Left ventricle myocardium inferior (tissue), 1 donor: ENCODE measurements at regions of chr3 and their contacts with region 1.

Region 1: DNA sequence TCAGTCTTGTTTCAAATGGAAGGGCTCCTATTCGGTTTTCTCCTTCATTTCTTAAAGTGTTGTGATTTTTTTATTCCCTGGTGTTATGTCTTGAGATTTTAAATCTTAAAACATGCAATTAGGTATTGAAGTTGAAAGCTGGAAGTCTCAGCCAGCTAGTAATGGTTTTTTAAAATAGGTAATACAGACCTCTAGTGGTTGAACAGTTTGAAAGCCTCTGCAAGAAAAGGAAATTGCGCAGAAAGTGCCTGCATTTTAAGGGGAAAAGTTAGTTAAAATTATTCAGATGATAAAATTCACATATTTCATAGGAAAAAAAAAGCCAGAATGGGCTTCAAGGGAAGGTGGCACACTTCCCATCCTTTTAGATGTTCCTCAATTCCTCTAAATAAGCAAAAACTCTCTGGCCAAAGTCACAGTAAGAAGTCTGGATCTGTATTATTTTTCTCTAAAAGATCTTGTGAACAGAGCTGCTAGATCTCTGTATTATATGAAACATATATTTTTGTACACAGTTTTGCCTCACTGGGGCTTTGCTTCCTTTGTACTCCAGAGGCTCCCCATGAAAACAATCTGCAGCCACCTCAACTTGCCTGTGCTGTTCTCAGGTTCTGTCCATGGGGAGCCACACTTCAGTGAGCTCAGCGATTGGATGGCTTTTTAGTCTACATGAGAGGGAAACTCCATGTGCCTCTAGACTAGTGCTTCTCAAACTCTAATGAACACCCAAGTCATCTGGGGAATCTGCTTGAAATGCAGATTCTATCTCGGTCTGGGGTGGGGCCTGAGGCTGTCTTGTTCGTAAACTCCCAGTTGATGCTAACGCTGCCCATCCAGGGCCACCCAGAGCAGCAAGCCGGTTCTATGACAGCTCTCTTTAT is 21.5 kb downstream of the AGTR1 start:
- DNase-seq: no peak
- H3K4me3 ChIP-seq: no peak overlapping the region
- H3K27ac ChIP-seq: no peak overlapping the region
- H3K4me1 ChIP-seq: no peaks in the 10 kb centered on the region
- H3K27me3 ChIP-seq: no peaks in the 10 kb centered on the region
- CTCF ChIP-seq: peak; percentile 50

Region 2: DNA sequence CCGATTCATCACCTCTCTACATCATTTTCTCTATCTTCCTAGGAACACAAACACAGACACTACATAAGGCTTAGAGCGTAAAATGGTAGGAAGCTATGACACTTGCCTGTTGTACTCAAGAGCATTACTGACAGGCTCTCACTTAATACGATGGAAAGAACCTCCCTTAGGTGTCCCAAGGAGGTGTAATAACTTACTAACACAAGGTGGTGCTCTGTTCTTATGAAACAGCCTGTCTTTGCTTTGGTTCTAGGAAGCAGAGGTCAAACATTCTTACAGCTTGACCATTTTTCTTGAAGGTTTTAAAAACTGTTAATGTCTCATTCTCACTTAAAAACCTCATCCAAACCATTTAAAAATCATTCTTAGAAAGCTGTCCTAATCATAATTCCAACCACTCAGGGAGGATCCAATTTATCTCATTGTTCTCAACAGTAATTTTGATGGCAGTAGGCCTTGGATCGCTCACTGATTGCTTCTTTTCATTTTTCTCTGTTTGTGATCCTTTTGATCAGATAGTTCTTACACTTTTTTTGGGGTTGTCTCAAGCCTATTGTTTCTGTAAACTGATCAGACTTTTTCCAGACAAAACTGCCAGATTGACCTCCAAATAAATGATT is 339.3 kb before region 1 on chr3:
- intact Hi-C with region 1: loop called (anchors 10 kb)
- DNase-seq: no peak
- H3K4me3 ChIP-seq: no peak overlapping the region
- H3K27ac ChIP-seq: no peak overlapping the region
- H3K4me1 ChIP-seq: no peaks in the 10 kb centered on the region
- H3K27me3 ChIP-seq: no peaks in the 10 kb centered on the region
- CTCF ChIP-seq: peak; percentile 56

Region 3: DNA sequence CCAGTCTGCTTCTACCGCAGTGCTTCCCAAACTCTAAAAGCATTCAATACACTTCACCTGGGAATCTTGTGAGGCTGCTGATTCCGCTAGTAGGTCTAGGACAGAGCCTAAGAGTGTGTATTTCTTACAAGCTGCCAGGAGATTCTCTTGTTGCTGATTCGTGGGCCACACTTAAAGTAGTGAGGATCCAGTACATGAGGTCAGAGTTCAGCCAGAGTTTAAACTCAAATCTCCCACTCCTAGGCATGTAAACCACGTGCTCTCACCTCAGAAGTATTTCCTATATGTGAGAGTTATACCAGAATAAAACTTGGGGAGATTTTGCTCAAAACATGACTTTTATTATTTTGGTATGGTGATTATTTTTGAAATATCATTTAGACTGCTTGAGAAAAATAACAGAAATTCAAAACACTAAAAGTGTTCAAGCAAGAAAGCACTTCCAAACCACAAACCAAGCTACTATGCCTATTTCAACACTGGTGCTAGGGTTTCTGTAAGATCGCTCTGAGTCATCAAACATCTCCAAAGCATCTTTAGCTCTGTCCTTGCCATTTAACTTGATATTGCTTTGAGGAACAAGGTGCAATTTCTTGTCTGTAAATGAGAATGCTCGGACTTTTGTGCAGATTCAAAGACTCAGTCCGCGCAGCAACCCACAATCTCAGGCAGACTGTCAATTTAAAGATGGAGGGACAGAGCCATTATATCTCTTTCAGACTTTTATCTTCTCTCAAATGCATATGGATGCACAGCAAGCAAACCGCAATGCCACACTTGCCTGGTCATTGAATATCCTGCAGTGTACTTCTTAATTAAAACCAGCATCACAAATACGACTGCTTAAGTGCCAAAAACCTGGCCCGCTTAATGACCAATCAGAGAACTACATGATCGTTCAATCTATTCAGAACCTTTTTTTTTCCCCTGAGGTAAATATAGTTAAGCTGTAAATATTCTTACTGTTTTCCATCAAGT is 38.3 kb after region 1 on chr3:
- intact Hi-C with region 1: no loop called
- DNase-seq: no peak
- H3K4me3 ChIP-seq: no peak overlapping the region
- H3K27ac ChIP-seq: no peak overlapping the region
- H3K4me1 ChIP-seq: no peaks in the 10 kb centered on the region
- H3K27me3 ChIP-seq: no peaks in the 10 kb centered on the region
- CTCF ChIP-seq: no peak

Region 4: GRCh38 chr3:148991194-148992026 is 272.2 kb after region 1 on chr3 and contains the start of gene GYG1:
- intact Hi-C with region 1: no loop called
- DNase-seq: peak; percentile 85
- H3K4me3 ChIP-seq: peak within 1 kb of the TSS; percentile 80
- H3K27ac ChIP-seq: peak within 1 kb of the TSS; percentile 94
- H3K4me1 ChIP-seq: peaks cover 44% of the 10 kb centered on the region
- H3K27me3 ChIP-seq: no peaks in the 10 kb centered on the region
- CTCF ChIP-seq: peak; percentile 49
- total RNA-seq, gene GYG1: 155 TPM